ENCODE measurements at regions of chr2 and their contacts with region 1.

Region 1: DNA sequence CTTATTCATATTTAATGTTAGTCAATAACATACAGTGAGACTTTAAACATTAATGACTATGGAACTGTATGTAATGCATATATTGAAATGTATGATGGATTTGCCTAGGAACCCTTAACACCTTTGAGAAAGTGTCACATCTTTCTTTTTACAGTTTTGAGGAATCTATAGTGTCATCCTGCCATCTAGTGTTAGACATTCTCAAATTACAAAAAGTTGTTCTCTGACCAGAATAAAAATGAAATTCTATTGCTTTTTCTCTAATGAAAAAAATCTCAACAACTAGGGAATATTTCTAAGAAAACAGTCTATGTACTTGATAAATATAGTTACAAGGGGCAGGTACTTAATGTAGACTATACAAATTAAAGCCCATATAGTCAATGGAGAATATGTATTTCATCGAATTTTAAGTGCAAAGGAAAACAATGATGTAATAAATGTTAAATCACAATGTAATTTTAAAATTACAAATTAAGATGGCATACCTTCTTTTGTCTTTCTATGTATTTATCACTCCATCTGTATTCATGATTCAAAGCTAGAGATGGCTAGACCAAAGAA is 5.1 kb upstream of the CALCRL start:
- DNase-seq: no peak
- ATAC-seq: no peak
- H3K4me3 ChIP-seq: no peak overlapping the region
- H3K27ac ChIP-seq: no peak overlapping the region
- H3K4me1 ChIP-seq: peaks cover 0 to 3% (median 0%) of the 10 kb centered on the region in 12 donors
- H3K27me3 ChIP-seq: no peaks in the 10 kb centered on the region
- CTCF ChIP-seq: peak in 11 of 12 donors; percentile 34 to 71 (median 49)
- POLR2A ChIP-seq: no peak

Region 2: GRCh38 chr2:186903216-186903615 is 549.9 kb before region 1 on chr2:
- intact Hi-C with region 1: loop called in 4 of 10 experiments (anchors 5 to 10 kb)
- DNase-seq: no peak
- ATAC-seq: no peak
- H3K4me3 ChIP-seq: no peak overlapping the region
- H3K27ac ChIP-seq: no peak overlapping the region
- H3K4me1 ChIP-seq: peaks cover 0 to 6% (median 0%) of the 10 kb centered on the region in 12 donors
- H3K27me3 ChIP-seq: no peaks in the 10 kb centered on the region
- CTCF ChIP-seq: peak in 11 of 12 donors; percentile 16 to 54 (median 39)
- POLR2A ChIP-seq: no peak

Region 3: GRCh38 chr2:186980787-186981550 is 472.2 kb before region 1 on chr2:
- intact Hi-C with region 1: loop called in 1 of 10 experiments (anchors 10 kb)
- DNase-seq: no peak
- ATAC-seq: no peak
- H3K4me3 ChIP-seq: no peak overlapping the region
- H3K27ac ChIP-seq: no peak overlapping the region
- H3K4me1 ChIP-seq: no peaks in the 10 kb centered on the region
- H3K27me3 ChIP-seq: no peaks in the 10 kb centered on the region
- CTCF ChIP-seq: no peak
- POLR2A ChIP-seq: no peak

Region 4: DNA sequence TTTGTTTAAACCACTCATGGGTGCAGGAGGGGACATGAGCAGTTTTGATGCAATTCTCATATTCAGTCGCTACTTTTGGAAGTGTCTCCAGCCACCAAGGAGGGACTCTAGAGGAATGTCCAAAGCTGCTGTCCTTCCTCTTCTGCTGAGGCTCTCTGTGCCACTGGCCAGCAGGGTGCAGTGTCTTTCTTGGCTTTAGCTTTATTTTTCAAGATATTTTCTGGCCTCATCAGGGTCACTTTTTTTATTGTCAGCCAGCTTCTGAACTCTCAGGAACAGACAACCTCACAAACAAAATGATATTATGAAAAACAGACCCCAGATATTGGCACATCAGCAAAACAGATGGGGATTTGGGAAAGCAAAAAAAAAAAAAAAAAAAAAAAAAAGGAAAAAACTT is 314.9 kb before region 1 on chr2:
- intact Hi-C with region 1: loop called in 8 of 10 experiments (anchors 2 to 10 kb)
- DNase-seq: peak in 4 of 5 donors; percentile 31 to 39 (median 35)
- ATAC-seq: peak in 3 of 4 donors; percentile 47 to 60 (median 55)
- H3K4me3 ChIP-seq: no peak overlapping the region
- H3K27ac ChIP-seq: peak overlapping the region in 1 of 12 donors; percentile 27
- H3K4me1 ChIP-seq: peaks cover 0 to 14% (median 0%) of the 10 kb centered on the region in 12 donors
- H3K27me3 ChIP-seq: no peaks in the 10 kb centered on the region
- CTCF ChIP-seq: peak in 11 of 12 donors; percentile 13 to 63 (median 48)
- POLR2A ChIP-seq: no peak

Region 5: DNA sequence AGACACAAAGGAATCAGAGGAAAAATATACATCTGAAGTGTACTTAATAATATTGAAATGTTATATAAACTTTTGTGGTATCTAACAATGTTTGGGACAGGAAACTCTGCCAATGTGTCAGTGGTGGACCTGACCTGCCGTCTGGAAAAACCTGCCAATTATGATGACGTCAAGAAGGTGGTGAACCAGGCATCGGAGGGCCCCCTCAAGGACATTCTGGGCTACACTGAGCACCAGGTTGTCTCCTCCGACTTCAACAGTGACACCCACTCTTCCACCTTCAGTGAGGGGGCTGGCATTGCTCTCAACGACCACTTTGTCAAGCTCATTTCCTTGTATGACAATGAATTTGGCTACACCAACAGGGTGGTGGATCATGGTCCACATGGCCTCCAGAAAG is 37.7 kb before region 1 on chr2:
- intact Hi-C with region 1: no loop called
- DNase-seq: peak in 1 of 5 donors; percentile 20
- ATAC-seq: no peak
- H3K4me3 ChIP-seq: no peak overlapping the region
- H3K27ac ChIP-seq: no peak overlapping the region
- H3K4me1 ChIP-seq: peaks cover 0 to 10% (median 0%) of the 10 kb centered on the region in 12 donors
- H3K27me3 ChIP-seq: no peaks in the 10 kb centered on the region
- CTCF ChIP-seq: no peak
- POLR2A ChIP-seq: no peak

Measured in heart left ventricle (tissue), 16 donors.